ENCODE measurements at regions of chr1 and their contacts with region 1.

Region 1: GRCh38 chr1:42657971-42658879 is at the start of gene PPIH:
- DNase-seq: peak; percentile 98
- ATAC-seq: peak; percentile 97
- H3K4me3 Mint-ChIP-seq: peak within 1 kb of the TSS; percentile 97
- H3K27ac Mint-ChIP-seq: peak within 1 kb of the TSS; percentile 97
- H3K4me1 Mint-ChIP-seq: peaks cover 39% of the 10 kb centered on the region
- H3K27me3 Mint-ChIP-seq: no peaks in the 10 kb centered on the region
- total RNA-seq, gene PPIH: 111 to 114 TPM

Region 2: DNA sequence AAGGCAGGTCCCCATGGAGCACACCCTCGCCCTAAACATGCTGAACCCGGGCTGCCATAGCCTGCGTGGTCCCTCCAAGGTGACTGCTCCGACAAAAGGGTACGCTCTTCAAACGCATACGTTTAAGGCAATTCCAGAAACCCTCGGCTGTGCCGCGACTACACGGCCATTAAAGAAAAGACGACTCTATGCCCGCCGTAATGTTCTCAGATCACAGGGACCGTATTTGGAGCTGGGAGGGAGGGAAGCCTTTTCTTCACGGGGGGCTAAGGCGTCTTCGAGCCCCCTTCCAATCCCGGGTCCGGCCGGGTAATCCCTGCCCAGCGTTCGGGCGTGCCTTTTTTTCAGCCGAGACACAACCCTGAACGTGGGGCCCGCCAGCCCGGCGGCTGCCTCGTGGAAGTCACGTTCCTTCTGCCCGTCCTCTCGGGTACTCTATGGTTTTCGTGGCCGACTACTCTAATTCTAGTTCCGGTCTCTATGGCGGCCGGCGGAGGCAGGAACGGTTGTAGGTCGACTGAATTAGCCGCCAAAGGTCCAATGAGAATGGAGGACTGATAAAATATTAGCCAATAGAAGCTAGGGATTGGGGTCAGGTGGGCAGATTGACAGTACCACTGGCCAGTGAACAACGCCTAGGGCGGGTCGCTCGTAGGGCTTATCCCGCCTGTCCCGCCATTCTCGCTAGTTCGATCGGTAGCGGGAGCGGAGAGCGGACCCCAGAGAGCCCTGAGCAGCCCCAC is 23.7 kb after region 1 on chr1 and contains the start of gene YBX1:
- CTCF ChIA-PET with region 1: interaction called, 5 read pairs
- POLR2A ChIA-PET with region 1: interaction called, 21 read pairs
- intact Hi-C with region 1: loop called (anchors 1 kb)
- DNase-seq: peak; percentile 96
- ATAC-seq: peak; percentile 97
- H3K4me3 Mint-ChIP-seq: peak within 1 kb of the TSS; percentile 93
- H3K27ac Mint-ChIP-seq: peak within 1 kb of the TSS; percentile 97
- H3K4me1 Mint-ChIP-seq: peaks cover 41% of the 10 kb centered on the region
- H3K27me3 Mint-ChIP-seq: no peaks in the 10 kb centered on the region
- total RNA-seq, gene YBX1: 1,224 to 1,435 TPM